Tibial artery (tissue), 4 donors: ENCODE measurements at regions of chr1 and their contacts with region 1.

Region 1: DNA sequence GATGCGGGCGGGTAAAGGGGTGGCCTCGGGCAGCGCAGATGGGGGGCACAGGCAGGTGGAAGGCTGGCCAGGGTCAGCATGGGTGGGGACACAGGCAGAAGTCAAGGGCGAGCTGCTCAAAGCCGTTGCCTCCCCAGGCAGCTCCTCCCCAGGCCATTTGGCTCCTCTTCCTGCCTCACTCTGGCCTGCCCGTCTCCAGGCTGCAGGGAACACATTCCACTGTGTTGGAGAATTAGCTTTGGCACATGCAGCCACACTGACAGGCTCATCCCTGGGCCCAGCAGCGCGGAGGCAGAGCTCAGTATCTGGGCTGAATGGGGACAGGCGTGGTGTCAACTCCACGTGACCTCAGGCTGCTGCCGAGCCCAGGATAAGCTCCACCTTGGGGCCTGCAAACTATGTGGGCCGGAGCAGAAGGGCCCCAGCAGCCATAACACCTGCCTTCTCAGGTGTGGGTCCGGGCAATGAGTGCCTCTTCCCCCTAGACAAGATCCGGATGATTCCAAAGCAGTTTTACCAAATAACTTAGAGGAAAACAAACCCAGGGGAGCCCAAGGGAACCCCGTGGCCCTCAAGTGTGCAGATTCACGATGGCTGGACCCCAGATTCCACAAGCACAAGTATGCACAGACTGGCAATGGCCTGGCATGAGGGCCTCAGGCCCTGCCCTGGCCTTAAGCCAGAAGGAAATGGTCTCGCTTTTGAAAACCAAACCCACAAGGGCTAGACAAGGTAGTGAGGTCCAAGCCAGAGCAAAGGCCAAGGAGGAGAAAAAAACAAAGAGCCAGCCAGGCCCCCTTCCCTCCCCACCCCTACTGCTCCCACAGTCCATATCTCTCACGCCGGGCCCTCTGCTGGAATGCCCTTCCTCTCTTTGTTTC is 40.2 kb downstream of the HSPG2 start:
- DNase-seq: peak; percentile 89 to 91
- H3K4me3 ChIP-seq: no peak overlapping the region
- H3K27ac ChIP-seq: peak overlapping the region; percentile 96 to 97
- H3K4me1 ChIP-seq: peaks cover 16 to 98% (median 89%) of the 10 kb centered on the region in 4 donors
- H3K27me3 ChIP-seq: no peaks in the 10 kb centered on the region
- CTCF ChIP-seq: no peak

Region 2: GRCh38 chr1:20717452-20718342 is 1179.2 kb before region 1 on chr1 and contains the start of gene KIF17:
- intact Hi-C with region 1: loop called (anchors 5 kb)
- DNase-seq: peak; percentile 66 to 80
- H3K4me3 ChIP-seq: peak within 1 kb of the TSS; percentile 43 to 52
- H3K27ac ChIP-seq: no peak within 1 kb of the TSS
- H3K4me1 ChIP-seq: peaks cover 0 to 14% (median 10%) of the 10 kb centered on the region in 4 donors
- H3K27me3 ChIP-seq: peaks cover 0 to 37% of the 10 kb centered on the region in 2 donors
- CTCF ChIP-seq: no peak